A549 (cell line): ENCODE measurements at regions of chr13 and their contacts with region 1.

Region 1: DNA sequence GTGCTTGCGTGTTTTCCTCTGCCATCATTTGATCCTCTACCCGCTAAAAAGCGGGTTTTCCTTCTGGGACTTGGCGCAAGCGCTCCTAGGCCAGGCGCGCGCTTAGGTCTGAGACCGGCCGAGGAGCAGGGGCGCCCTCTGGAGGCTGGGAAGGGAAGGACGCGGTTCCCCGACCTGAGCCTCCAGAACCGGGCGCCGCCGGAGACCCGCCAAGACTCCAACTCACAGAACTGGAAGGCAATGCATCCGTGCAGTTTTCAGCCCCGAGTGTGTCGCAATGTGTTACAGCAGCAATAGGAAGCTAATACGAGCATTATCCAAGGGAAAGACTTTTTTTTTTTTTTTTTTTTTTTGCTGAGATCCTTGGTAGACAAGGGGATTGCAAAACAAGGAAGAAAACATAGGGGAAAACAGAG is 190.9 kb downstream of the COL4A1 start:
- DNase-seq: peak; percentile 52 to 79
- ATAC-seq: peak; percentile 79 to 92
- H3K4me3 ChIP-seq: no peak overlapping the region
- H3K27ac ChIP-seq: peak overlapping the region; percentile 38 to 40; a peak in 1 of 6 replicates
- H3K4me1 ChIP-seq: peaks cover 47% of the 10 kb centered on the region
- CTCF ChIP-seq: peak; percentile 77
- EP300 ChIP-seq: no peak
- POLR2A ChIP-seq: no peak
- RAD21 ChIP-seq: peak; percentile 76 to 82

Region 2: GRCh38 chr13:108915634-108916512 is 1200.2 kb before region 1 on chr13:
- CTCF ChIA-PET with region 1: interaction called, 18 read pairs
- POLR2A ChIA-PET with region 1: interaction called, 3 read pairs
- DNase-seq: peak; percentile 67 to 92
- ATAC-seq: peak; percentile 90 to 92
- H3K4me3 ChIP-seq: peak overlapping the region; percentile 19; the same call in 2 of the 3 replicates
- H3K27ac ChIP-seq: peak overlapping the region; percentile 80 to 86
- H3K4me1 ChIP-seq: peaks cover 38% of the 10 kb centered on the region
- CTCF ChIP-seq: no peak
- EP300 ChIP-seq: 0 out of 5 replicates have a peak, but pooled peaks of 1 of the 2 experiments have one; percentile 45
- POLR2A ChIP-seq: no peak
- RAD21 ChIP-seq: no peak

Region 3: DNA sequence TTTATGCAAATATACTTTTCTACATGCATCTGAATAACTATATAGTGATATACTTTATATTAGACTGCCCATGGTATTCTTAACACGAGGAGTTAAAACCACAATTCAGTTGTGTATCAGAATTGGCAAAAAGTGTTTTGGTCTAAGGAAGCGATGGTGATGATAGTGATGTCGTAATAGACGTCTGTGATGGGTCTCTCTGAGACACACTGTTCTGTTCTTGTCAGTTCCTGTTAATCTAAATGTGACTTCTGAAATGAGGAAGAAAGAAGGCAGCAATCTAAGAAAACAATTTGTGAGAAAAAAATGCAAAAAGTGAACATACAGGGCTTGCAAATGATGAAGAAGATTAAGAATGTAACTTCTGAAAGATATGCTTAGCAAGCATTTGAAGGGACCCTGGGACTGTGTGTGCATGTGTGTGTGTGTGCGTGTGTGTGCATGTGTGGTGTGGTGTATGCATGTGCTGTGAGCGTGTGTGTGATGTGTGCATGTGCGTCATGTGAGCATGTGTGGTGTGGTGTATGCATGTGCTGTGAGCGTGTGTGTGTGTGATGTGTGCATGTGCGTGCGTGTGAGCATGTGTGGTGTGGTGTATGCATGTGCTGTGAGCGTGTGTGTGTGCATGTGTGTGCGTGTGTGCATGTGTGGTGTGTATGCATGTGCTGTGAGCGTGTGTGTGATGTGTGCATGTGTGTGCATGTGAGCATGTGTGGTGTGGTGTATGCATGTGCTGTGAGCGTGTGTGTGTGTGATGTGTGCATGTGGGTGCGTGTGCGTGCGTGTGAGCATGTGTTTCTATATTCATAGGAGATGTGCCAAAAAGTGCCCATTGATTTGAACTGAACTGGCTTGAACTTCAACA is 461.5 kb before region 1 on chr13:
- CTCF ChIA-PET with region 1: no interaction called
- POLR2A ChIA-PET with region 1: no interaction called
- DNase-seq: no peak
- ATAC-seq: no peak
- H3K4me3 ChIP-seq: no peak overlapping the region
- H3K27ac ChIP-seq: no peak overlapping the region; a peak in 1 of 6 replicates
- H3K4me1 ChIP-seq: no peaks in the 10 kb centered on the region
- CTCF ChIP-seq: no peak
- EP300 ChIP-seq: no peak
- POLR2A ChIP-seq: peak; percentile 19; the same call in 1 of the 2 replicates
- RAD21 ChIP-seq: no peak

Region 4: DNA sequence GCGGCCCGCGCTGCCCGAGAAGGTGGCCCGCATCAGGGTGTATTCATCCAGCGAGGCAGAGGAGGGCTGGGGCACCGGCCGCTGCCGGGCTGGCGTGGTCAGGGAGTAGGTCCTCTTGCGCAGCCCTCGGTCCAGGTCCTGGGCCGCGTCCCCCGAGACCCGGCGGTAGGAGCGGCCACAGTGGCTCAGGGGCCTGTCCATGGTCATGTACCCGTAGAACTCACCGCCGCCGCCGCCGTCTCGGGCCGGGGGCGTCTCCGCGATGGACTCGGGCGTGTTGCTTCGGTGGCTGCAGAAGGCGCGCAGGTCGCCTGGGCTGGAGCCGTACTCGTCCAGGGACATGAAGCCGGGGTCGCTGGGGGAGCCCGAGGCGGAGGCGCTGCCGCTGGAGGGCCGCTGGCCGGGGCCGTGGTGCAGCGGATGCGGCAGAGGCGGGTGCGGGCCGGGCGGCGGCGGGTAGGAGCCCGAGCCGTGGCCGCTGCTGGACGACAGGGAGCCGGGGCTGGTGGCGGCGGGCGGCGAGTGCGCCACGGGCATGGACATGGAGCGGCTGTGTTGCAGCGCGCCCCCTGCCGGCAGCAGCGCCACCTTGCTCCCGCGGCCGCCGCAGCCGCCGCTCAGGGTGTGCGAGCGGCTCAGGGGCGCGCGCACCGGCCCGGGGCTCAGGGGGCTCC is 331.7 kb before region 1 on chr13:
- CTCF ChIA-PET with region 1: interaction called, 16 read pairs
- POLR2A ChIA-PET with region 1: no interaction called
- DNase-seq: peak in 1 of 2 experiments; percentile 79
- ATAC-seq: peak; percentile 36 to 45
- H3K4me3 ChIP-seq: peak overlapping the region; percentile 89
- H3K27ac ChIP-seq: peak overlapping the region; percentile 89 to 98
- H3K4me1 ChIP-seq: peaks cover 14% of the 10 kb centered on the region; the same call in 2 of the 3 replicates
- CTCF ChIP-seq: peak; percentile 64
- EP300 ChIP-seq: no peak
- POLR2A ChIP-seq: no peak
- RAD21 ChIP-seq: peak; percentile 39 to 67; a peak in 4 of 5 replicates

Region 5: DNA sequence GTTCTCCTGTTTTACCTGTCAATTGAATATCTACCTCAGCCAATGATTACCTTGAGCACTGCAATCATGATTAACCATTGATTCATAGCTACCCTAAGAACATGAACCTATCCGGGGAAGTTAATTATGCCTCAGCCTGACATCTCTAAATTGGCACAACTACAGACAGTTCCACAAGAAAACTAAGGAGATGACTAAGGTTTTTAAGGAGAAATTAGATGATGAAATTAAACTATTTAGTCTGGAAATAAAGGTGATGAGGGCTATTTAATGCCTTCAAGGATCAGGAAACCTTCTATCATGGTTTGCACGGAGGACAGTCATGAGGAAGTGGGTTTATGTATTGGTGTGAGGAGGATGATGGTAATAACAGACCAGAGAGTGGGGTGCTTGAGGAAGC is 12.5 kb before region 1 on chr13:
- CTCF ChIA-PET with region 1: interaction called, 12 read pairs
- POLR2A ChIA-PET with region 1: no interaction called
- DNase-seq: no peak
- ATAC-seq: no peak
- H3K4me3 ChIP-seq: no peak overlapping the region
- H3K27ac ChIP-seq: no peak overlapping the region; a peak in 1 of 6 replicates
- H3K4me1 ChIP-seq: peaks cover 1% of the 10 kb centered on the region; the same call in 1 of the 3 replicates
- CTCF ChIP-seq: no peak
- EP300 ChIP-seq: no peak
- POLR2A ChIP-seq: no peak
- RAD21 ChIP-seq: no peak

Region 6: GRCh38 chr13:110138010-110138699 is 22.1 kb after region 1 on chr13:
- CTCF ChIA-PET with region 1: interaction called, 10 read pairs
- POLR2A ChIA-PET with region 1: no interaction called
- DNase-seq: peak; percentile 57 to 66
- ATAC-seq: peak; percentile 85 to 86
- H3K4me3 ChIP-seq: peak overlapping the region; percentile 64
- H3K27ac ChIP-seq: peak overlapping the region; percentile 84 to 91
- H3K4me1 ChIP-seq: peaks cover 7% of the 10 kb centered on the region; the same call in 1 of the 3 replicates
- CTCF ChIP-seq: no peak; the same call in 2 of the 3 replicates
- EP300 ChIP-seq: no peak
- POLR2A ChIP-seq: no peak
- RAD21 ChIP-seq: 0 out of 5 replicates have a peak, but pooled peaks of 1 of the 2 experiments have one; percentile 10

Region 7: GRCh38 chr13:110485603-110486002 is 369.5 kb after region 1 on chr13:
- CTCF ChIA-PET with region 1: no interaction called
- POLR2A ChIA-PET with region 1: no interaction called
- DNase-seq: no peak
- ATAC-seq: peak in 1 of 2 experiments; percentile 28; a peak in 2 of 6 replicates
- H3K4me3 ChIP-seq: no peak overlapping the region
- H3K27ac ChIP-seq: peak overlapping the region in 1 of 2 experiments; percentile 20; a peak in 1 of 6 replicates
- H3K4me1 ChIP-seq: no peaks in the 10 kb centered on the region
- CTCF ChIP-seq: no peak
- EP300 ChIP-seq: no peak
- POLR2A ChIP-seq: no peak
- RAD21 ChIP-seq: no peak